Sigmoid colon (tissue), 7 donors: ENCODE measurements at regions of chr3 and their contacts with region 1.

Region 1: DNA sequence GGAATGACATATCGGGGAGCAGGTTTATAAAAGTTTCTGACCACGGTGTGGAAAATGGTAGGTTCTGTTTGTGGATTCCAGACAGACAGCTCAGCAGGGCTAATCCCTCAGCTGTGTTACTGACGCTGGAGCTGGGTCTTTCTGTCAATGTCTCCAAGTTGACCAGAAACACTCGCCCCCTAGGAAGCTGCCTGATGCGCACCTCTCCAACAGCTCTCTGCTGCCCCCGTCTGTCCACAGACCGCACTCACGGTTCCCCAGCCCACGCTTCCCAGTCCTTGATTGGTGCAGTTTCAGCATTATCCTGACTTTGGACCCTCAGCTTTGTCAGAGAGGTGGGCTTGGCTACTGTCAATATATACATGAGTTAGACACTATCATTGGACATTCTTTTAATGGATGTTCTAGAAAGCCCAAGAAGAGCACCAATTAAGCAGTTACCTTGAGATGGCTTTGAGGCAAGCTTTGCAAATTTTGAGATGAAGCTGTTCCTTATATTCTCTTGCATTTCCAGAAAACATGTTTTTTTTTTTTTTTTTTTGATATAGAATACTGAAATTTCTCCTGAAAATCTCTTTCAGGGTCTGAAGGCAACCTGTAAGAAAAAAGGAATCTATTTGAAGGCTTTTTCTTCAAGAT is 98.9 kb upstream of the TBC1D5 start:
- DNase-seq: peak; percentile 78
- H3K4me3 ChIP-seq: no peak overlapping the region
- H3K27ac ChIP-seq: no peak overlapping the region
- H3K4me1 ChIP-seq: no peaks in the 10 kb centered on the region
- H3K27me3 ChIP-seq: no peaks in the 10 kb centered on the region
- CTCF ChIP-seq: peak; percentile 69 to 87 (median 78)
- EP300 ChIP-seq: no peak
- POLR2A ChIP-seq: no peak

Region 2: GRCh38 chr3:17258823-17259436 is 582.4 kb before region 1 on chr3:
- intact Hi-C with region 1: loop called (anchors 2 kb)
- DNase-seq: no peak
- H3K4me3 ChIP-seq: no peak overlapping the region
- H3K27ac ChIP-seq: no peak overlapping the region
- H3K4me1 ChIP-seq: no peaks in the 10 kb centered on the region
- H3K27me3 ChIP-seq: no peaks in the 10 kb centered on the region
- CTCF ChIP-seq: peak in 3 of 4 experiments; percentile 43 to 76 (median 62)
- EP300 ChIP-seq: no peak
- POLR2A ChIP-seq: no peak

Region 3: DNA sequence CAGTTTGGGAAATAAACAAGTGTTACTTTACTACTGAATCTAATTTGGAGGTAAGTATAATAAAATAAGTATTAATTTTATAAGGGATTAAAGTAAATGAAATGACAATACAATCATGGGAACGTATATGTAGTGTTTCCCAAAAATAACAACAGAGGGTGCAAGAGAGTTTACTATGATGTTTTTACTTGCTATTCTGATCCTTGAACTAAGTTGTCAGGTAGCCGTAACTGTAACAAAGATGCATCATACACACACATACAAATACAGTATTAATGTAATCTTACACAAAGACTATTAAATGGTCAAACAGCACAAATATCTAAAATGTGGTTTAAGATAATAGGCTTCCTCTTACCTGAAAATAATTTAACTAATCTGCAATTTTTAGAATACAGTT is 410.3 kb before region 1 on chr3:
- intact Hi-C with region 1: loop called (anchors 2 kb)
- DNase-seq: no peak
- H3K4me3 ChIP-seq: no peak overlapping the region
- H3K27ac ChIP-seq: no peak overlapping the region
- H3K4me1 ChIP-seq: peaks cover 0 to 22% (median 0%) of the 10 kb centered on the region in 4 donors
- H3K27me3 ChIP-seq: no peaks in the 10 kb centered on the region
- CTCF ChIP-seq: peak in 2 of 4 experiments; percentile 33 to 41
- EP300 ChIP-seq: no peak
- POLR2A ChIP-seq: no peak

Region 4: DNA sequence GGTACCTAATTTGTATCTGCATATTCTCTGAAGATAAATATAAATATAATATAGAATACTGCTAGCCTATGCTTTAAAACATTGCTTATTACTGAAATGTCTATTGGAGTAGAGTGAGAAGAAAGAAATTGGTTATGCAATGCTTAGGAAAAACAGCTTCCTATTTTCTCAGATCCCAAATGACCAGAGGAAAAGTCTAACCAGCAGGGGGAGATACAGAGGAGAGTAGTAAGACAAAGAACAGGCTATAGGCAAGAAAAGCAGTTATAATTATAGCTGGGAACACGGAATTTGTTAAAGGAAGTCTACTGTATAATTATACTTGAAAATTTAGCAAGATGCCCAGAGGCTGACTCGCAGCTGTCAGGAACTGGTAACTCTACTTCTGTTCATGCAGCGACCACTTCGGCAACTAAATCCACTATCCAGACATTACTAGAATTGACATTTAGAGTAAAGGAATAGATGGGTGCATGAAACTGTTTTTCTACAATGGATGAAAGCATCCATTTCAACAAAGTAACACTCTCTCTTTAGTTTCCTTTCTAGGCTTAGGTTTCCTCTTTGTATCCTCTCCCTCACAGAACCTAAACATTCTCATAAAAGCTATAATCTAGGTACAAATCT is 196.1 kb before region 1 on chr3:
- intact Hi-C with region 1: loop called (anchors 2 kb)
- DNase-seq: no peak
- H3K4me3 ChIP-seq: no peak overlapping the region
- H3K27ac ChIP-seq: no peak overlapping the region
- H3K4me1 ChIP-seq: peaks cover 0 to 4% (median 3%) of the 10 kb centered on the region in 4 donors
- H3K27me3 ChIP-seq: no peaks in the 10 kb centered on the region
- CTCF ChIP-seq: peak in 3 of 4 experiments; percentile 50 to 65 (median 51)
- EP300 ChIP-seq: no peak
- POLR2A ChIP-seq: no peak

Region 5: GRCh38 chr3:17747174-17747889 is 94.0 kb before region 1 on chr3:
- intact Hi-C with region 1: no loop called
- DNase-seq: no peak
- H3K4me3 ChIP-seq: no peak overlapping the region
- H3K27ac ChIP-seq: no peak overlapping the region
- H3K4me1 ChIP-seq: peaks cover 0 to 8% (median 7%) of the 10 kb centered on the region in 4 donors
- H3K27me3 ChIP-seq: no peaks in the 10 kb centered on the region
- CTCF ChIP-seq: no peak
- EP300 ChIP-seq: no peak
- POLR2A ChIP-seq: no peak